ENCODE measurements at regions of chr4 and their contacts with region 1.

Region 1: GRCh38 chr4:88600176-88600838 is 8.0 kb downstream of the HERC3 start:
- DNase-seq: no peak
- H3K4me3 Mint-ChIP-seq: peak overlapping the region; percentile 50
- H3K27ac Mint-ChIP-seq: peak overlapping the region; percentile 84
- H3K4me1 Mint-ChIP-seq: peaks cover 40% of the 10 kb centered on the region
- H3K27me3 Mint-ChIP-seq: no peaks in the 10 kb centered on the region
- CTCF ChIP-seq: no peak

Region 2: GRCh38 chr4:88523325-88524129 is 76.8 kb before region 1 on chr4 and contains the start of gene PYURF:
- CTCF ChIA-PET with region 1: interaction called, 3 read pairs
- POLR2A ChIA-PET with region 1: interaction called, 11 read pairs
- intact Hi-C with region 1: no loop called
- DNase-seq: peak; percentile 93
- H3K4me3 Mint-ChIP-seq: peak within 1 kb of the TSS; percentile 97
- H3K27ac Mint-ChIP-seq: peak within 1 kb of the TSS; percentile 89
- H3K4me1 Mint-ChIP-seq: peaks cover 14% of the 10 kb centered on the region
- H3K27me3 Mint-ChIP-seq: no peaks in the 10 kb centered on the region
- CTCF ChIP-seq: no peak
- total RNA-seq, gene PYURF: 80.9 and 82.5 TPM in 2 replicates

Region 3: GRCh38 chr4:88613417-88613875 is 13.1 kb after region 1 on chr4:
- CTCF ChIA-PET with region 1: interaction called, 6 read pairs
- POLR2A ChIA-PET with region 1: interaction called, 199 read pairs
- intact Hi-C with region 1: no loop called
- DNase-seq: no peak
- H3K4me3 Mint-ChIP-seq: no peak overlapping the region
- H3K27ac Mint-ChIP-seq: peak overlapping the region; percentile 59
- H3K4me1 Mint-ChIP-seq: peaks cover 56% of the 10 kb centered on the region
- H3K27me3 Mint-ChIP-seq: no peaks in the 10 kb centered on the region
- CTCF ChIP-seq: no peak

Region 4: DNA sequence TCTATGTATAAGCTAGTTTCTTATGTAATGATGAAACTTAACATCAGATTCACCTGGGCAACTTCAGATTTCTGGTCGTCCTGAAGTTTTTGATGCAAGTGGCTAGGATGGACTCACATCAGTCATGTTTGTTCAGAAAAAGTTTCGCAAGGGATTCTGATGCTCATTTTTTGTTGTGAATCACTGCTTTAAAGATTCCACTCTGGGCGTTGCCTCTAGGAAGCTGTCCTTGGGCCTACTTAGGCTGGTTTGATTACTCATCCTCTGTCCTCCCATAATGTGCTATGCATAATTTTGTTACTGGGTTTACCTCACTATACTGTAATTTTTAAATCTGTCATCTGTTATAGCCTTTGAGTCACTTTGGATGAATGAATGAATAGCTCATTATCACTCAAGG is 22.8 kb after region 1 on chr4:
- CTCF ChIA-PET with region 1: interaction called, 4 read pairs
- POLR2A ChIA-PET with region 1: interaction called, 199 read pairs
- intact Hi-C with region 1: no loop called
- DNase-seq: peak; percentile 95
- H3K4me3 Mint-ChIP-seq: peak overlapping the region; percentile 18
- H3K27ac Mint-ChIP-seq: peak overlapping the region; percentile 73
- H3K4me1 Mint-ChIP-seq: peaks cover 29% of the 10 kb centered on the region
- H3K27me3 Mint-ChIP-seq: no peaks in the 10 kb centered on the region
- CTCF ChIP-seq: no peak

Region 5: GRCh38 chr4:88628759-88629158 is 28.5 kb after region 1 on chr4:
- CTCF ChIA-PET with region 1: interaction called, 5 read pairs
- POLR2A ChIA-PET with region 1: interaction called, 20 read pairs
- intact Hi-C with region 1: no loop called
- DNase-seq: peak; percentile 84
- H3K4me3 Mint-ChIP-seq: peak overlapping the region; percentile 35
- H3K27ac Mint-ChIP-seq: peak overlapping the region; percentile 91
- H3K4me1 Mint-ChIP-seq: peaks cover 19% of the 10 kb centered on the region
- H3K27me3 Mint-ChIP-seq: no peaks in the 10 kb centered on the region
- CTCF ChIP-seq: peak; percentile 17

Region 6: DNA sequence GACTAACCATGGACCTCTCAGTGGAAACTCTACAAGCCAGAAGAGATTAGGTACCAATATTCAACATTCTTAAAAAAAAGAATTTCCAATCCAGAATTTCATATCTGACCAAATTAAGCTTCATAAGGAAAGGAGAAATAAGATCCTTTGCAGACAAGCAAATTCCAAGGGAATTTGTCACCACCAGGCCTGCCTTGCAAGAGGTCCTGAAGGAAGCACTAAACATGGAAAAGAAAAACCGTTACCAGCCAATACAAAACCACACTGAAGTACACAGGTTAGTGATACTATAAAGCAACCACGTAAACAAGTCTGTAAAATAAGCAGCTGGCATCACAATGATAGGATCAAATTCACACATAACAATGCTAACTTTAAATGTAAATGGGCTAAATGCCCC is 300.1 kb after region 1 on chr4:
- CTCF ChIA-PET with region 1: no interaction called
- POLR2A ChIA-PET with region 1: no interaction called
- intact Hi-C with region 1: no loop called
- DNase-seq: peak; percentile 28
- H3K4me3 Mint-ChIP-seq: no peak overlapping the region
- H3K27ac Mint-ChIP-seq: peak overlapping the region; percentile 59
- H3K4me1 Mint-ChIP-seq: peaks cover 13% of the 10 kb centered on the region
- H3K27me3 Mint-ChIP-seq: no peaks in the 10 kb centered on the region
- CTCF ChIP-seq: no peak

Region 7: DNA sequence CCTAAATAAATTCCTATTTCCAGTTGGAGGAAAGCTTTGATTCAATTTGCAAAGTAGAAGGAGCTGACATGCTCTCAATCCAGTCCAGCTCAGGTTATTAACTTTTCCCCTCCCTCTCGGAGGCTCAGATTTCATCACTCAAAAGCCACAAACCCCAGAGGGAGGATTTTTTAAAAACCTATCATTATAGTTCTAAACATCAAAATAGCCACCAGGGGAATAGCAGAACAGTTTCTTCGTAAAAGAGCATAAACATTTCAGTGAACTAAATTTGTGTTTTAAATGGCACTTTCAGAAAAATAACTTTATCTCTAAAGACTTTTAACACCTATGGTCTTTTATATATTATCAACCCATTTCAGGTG is 698.5 kb after region 1 on chr4:
- CTCF ChIA-PET with region 1: no interaction called
- POLR2A ChIA-PET with region 1: no interaction called
- intact Hi-C with region 1: no loop called
- DNase-seq: peak; percentile 57
- H3K4me3 Mint-ChIP-seq: peak overlapping the region; percentile 13
- H3K27ac Mint-ChIP-seq: no peak overlapping the region
- H3K4me1 Mint-ChIP-seq: peaks cover 15% of the 10 kb centered on the region
- H3K27me3 Mint-ChIP-seq: no peaks in the 10 kb centered on the region
- CTCF ChIP-seq: no peak

Measured in MCF 10A (cell line).